A673 (cell line): ENCODE measurements at regions of chr11 and their contacts with region 1.

Region 1: DNA sequence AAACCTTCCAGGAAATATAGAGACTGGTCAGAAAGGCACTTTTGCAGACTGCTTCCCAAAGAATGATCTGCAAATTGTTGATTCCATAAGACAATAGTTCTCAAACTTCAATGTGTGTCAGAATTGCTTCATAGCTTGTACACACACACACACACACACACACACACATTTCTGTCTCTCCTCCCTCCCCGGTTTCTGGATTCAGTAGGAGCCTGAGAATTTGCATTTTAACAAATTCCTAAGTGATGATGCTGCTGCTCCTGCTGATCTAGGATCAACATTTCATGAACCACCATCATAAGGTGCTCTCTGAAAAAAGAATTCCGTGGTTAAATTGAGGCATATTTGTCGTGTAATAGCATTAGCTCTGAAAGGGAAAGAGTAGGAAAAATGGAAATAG is 35.3 kb upstream of the FZD4 start:
- DNase-seq: peak; percentile 90
- H3K4me3 ChIP-seq: peak overlapping the region; percentile 25
- H3K27ac ChIP-seq: peak overlapping the region; percentile 88
- H3K4me1 ChIP-seq: peaks cover 81% of the 10 kb centered on the region
- H3K27me3 ChIP-seq: no peaks in the 10 kb centered on the region
- CTCF ChIP-seq: no peak

Region 2: DNA sequence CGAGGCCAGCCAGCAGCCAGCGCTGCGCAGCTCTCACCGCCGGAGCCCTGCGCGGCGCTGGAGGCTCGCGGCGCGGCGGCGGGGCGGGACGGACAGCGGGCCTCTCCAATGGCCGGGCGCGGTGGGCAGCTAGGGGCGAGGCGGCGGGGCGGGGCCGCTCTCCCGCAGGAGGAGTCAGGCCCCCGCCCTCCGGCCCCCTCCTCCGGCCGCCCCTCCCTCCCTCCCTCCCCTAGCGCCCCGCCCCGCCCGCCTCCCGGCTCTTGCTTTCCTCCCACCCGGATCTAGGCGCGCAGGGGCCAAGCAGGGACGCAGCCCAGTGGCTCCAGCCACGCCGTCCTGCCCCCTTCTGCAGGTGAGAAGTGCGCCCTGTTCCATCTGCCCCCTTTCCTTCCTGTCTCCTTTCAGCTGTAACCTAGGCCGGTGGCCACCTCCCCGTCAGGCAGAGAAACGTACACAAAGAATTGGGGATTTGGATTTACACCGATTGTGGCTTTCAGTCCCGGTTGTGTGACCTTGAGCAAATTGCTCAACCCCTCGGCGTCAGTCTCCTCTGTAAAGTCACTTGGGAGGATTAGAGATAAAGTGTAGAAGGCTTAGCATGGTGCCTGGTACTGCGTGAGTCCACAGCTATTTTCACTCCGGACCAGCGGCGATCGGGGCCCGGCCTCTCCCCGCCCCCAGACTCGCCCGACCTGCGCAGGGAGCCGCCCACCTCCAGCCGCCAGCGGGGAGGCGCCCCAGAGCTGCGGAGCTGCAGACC is 35.0 kb before region 1 on chr11 and contains the start of gene FZD4:
- CTCF ChIA-PET with region 1: interaction called, 3 read pairs
- POLR2A ChIA-PET with region 1: interaction called, 11 read pairs
- intact Hi-C with region 1: loop called (anchors 5 kb)
- DNase-seq: peak; percentile 97
- H3K4me3 ChIP-seq: peak within 1 kb of the TSS; percentile 90
- H3K27ac ChIP-seq: peak within 1 kb of the TSS; percentile 88
- H3K4me1 ChIP-seq: peaks cover 60% of the 10 kb centered on the region
- H3K27me3 ChIP-seq: no peaks in the 10 kb centered on the region
- CTCF ChIP-seq: peak; percentile 50
- total RNA-seq, gene FZD4: 82.7 and 89.1 TPM in 2 replicates